SK-N-SH (cell line): ENCODE measurements at regions of chr3 and their contacts with region 1.

Region 1: DNA sequence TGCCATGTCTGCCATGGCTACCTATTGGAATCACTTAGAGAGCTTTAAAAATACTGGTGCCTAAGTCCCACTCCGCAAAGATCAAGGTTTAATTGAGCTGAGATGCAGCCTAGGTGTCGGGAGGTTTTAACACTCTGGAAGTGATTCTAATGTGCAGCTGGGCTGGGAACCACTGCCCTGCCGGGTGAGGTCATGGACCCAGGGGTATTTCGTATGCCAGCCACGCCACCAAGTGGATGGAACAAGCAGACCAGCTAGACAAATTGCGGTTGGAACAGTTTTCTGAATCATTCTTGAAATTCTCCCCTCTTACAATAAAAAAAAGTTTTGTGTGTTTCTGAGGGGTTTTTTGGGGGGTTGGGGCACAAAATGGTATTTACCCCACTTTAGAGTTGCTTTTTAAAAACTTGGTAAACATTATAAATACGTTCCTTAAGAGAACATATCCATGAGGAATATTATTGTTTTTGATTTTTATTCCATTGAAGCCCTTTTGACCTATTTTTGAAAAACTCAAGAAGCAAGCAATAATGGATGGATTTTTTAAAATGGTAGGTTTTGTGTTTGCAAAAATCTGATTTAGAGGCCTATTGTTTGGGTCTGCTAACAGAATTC is 66.2 kb upstream of the CSTA start:
- DNase-seq: peak; percentile 66
- H3K4me3 ChIP-seq: no peak overlapping the region; a peak in 1 of 4 replicates
- H3K27ac ChIP-seq: no peak overlapping the region
- H3K4me1 ChIP-seq: no peaks in the 10 kb centered on the region
- H3K27me3 ChIP-seq: peaks cover 27% of the 10 kb centered on the region; the same call in 1 of the 2 replicates
- CTCF ChIP-seq: peak; percentile 64
- EP300 ChIP-seq: no peak
- RAD21 ChIP-seq: peak; percentile 83

Region 2: DNA sequence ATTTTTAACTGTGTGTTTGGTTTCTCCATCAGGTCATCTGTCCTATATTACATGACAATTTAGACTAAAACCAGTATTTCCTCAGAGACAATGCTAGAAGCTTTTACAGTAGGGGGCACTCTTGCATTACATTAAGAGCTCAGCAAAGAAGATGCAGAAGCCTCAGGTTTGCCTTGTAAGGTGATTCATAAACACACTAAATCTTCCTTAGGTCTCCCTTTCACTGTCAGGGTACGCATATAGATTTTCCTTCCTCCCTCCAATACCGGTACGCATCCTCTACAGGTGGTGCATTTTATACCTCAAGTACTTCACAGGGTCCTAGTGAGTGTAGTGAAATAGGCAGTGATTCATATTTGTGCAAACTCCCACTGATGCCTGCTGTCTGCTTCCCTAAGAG is 157.2 kb before region 1 on chr3:
- CTCF ChIA-PET with region 1: interaction called, 23 read pairs
- POLR2A ChIA-PET with region 1: no interaction called
- DNase-seq: peak; percentile 11
- H3K4me3 ChIP-seq: no peak overlapping the region; a peak in 1 of 4 replicates
- H3K27ac ChIP-seq: no peak overlapping the region
- H3K4me1 ChIP-seq: no peaks in the 10 kb centered on the region
- H3K27me3 ChIP-seq: peaks cover 13% of the 10 kb centered on the region; the same call in 1 of the 2 replicates
- CTCF ChIP-seq: peak; percentile 62
- EP300 ChIP-seq: no peak
- RAD21 ChIP-seq: peak; percentile 80

Region 3: DNA sequence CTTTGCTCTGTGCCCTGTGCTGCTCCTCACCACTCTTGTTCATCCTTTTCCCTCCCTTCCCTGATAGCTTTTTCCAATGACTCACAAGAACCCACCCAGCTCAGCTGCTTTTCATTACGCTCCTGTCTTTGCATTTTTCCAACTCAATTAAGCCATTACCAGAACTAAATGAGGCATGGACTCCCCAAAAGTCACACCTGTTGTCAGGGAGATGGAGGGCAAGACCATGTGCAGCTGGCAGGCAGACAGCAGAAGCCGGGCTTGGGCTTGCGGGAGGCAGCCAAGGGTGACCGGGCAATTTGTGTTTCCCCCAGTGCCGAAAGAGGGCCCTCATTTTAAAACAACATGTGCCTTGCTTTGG is 11.1 kb before region 1 on chr3:
- CTCF ChIA-PET with region 1: interaction called, 13 read pairs
- POLR2A ChIA-PET with region 1: no interaction called
- DNase-seq: no peak
- H3K4me3 ChIP-seq: no peak overlapping the region
- H3K27ac ChIP-seq: no peak overlapping the region
- H3K4me1 ChIP-seq: peaks cover 0 to 7% of the 10 kb centered on the region in 2 experiments; a peak in 1 of 4 replicates
- H3K27me3 ChIP-seq: peaks cover 21% of the 10 kb centered on the region; the same call in 1 of the 2 replicates
- CTCF ChIP-seq: no peak
- EP300 ChIP-seq: no peak
- RAD21 ChIP-seq: no peak